Psoas muscle (tissue), 8 donors: ENCODE measurements at regions of chrX and their contacts with region 1.

Region 1: GRCh38 chrX:47523297-47523696 is 37.7 kb upstream of the ARAF start:
- DNase-seq: peak; percentile 85 to 92
- ATAC-seq: peak; percentile 98 to 99 (median 98)
- H3K4me3 ChIP-seq: peak overlapping the region; percentile 61
- H3K27ac ChIP-seq: no peak overlapping the region
- H3K4me1 ChIP-seq: no peaks in the 10 kb centered on the region
- H3K27me3 ChIP-seq: no peaks in the 10 kb centered on the region
- CTCF ChIP-seq: peak; percentile 80

Region 2: GRCh38 chrX:47193475-47194193 is 329.7 kb before region 1 on chrX and contains the start of gene UBA1:
- intact Hi-C with region 1: loop called (anchors 1 to 5 kb)
- DNase-seq: peak; percentile 96 to 98
- ATAC-seq: peak; percentile 88 to 91 (median 90)
- H3K4me3 ChIP-seq: peak within 1 kb of the TSS; percentile 83
- H3K27ac ChIP-seq: peak within 1 kb of the TSS; percentile 97
- H3K4me1 ChIP-seq: peaks cover 43% of the 10 kb centered on the region
- H3K27me3 ChIP-seq: no peaks in the 10 kb centered on the region
- CTCF ChIP-seq: peak; percentile 92
- total RNA-seq, gene UBA1: 145 to 230 (median 187) TPM

Region 3: DNA sequence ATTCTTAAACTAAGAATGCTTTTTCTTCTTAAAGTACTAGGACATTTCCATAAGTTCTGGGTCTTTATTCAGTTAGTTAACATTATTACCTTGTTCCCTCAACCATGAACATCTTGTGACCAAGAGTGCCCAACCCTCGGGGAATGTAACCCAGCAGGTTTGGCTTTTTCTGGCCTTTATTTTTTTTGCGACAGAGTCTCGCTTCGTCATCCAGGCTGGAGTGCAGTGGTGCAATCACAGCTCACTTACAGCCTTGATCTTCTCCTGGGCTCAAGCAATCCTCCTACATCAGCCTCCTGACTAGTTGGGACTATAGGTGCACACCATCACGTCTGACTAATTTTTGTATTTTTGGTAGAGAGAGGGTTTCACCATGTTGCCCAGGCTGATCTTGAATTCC is 225.4 kb before region 1 on chrX:
- intact Hi-C with region 1: no loop called
- DNase-seq: no peak
- ATAC-seq: no peak
- H3K4me3 ChIP-seq: no peak overlapping the region
- H3K27ac ChIP-seq: no peak overlapping the region
- H3K4me1 ChIP-seq: no peaks in the 10 kb centered on the region
- H3K27me3 ChIP-seq: peaks cover 0 to 22% (median 0%) of the 10 kb centered on the region in 3 donors
- CTCF ChIP-seq: no peak

Region 4: DNA sequence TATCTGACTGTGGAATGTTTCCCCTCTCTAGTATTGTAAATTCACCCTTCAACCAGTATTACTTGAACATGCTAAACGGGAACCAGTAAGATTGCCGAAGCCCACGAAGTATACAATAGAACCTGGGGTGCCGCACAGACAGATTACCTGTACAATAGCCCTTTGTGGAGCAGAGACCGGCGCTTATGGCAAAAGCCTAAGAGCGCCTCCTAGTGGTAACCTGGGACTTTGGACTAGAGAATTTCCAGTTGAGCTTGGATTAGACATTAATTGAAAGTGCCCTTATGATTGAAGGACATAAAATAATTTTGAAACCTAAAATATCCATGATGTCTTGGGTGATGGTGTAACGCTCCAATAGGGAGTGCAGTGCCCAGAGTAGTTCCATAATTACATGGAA is 138.8 kb before region 1 on chrX:
- intact Hi-C with region 1: loop called in 1 of 2 experiments (anchors 10 kb)
- DNase-seq: no peak
- ATAC-seq: peak in 3 of 4 donors; percentile 56 to 71 (median 58)
- H3K4me3 ChIP-seq: no peak overlapping the region
- H3K27ac ChIP-seq: no peak overlapping the region
- H3K4me1 ChIP-seq: no peaks in the 10 kb centered on the region
- H3K27me3 ChIP-seq: peaks cover 0 to 9% (median 0%) of the 10 kb centered on the region in 3 donors
- CTCF ChIP-seq: peak; percentile 67

Region 5: DNA sequence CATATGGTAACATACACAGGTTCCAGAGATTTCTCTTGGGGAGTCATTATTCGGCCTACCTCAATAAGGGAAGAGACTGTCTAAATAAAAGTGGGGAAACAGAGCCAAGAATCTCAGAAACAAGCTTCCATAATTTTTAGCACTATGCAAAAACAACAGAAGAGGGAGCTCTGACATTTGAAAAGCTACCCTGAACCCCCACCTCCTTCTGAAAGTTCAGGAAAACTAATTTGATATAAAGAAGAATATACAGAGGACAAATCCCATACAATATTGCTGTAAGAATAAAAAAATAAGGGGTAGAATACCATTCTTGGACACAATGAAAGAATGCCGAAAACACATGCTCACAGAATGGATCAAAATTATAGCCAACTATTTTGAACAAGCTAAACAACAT is 26.0 kb before region 1 on chrX:
- intact Hi-C with region 1: loop called in 1 of 2 experiments (anchors 2 kb)
- DNase-seq: no peak
- ATAC-seq: no peak
- H3K4me3 ChIP-seq: no peak overlapping the region
- H3K27ac ChIP-seq: no peak overlapping the region
- H3K4me1 ChIP-seq: peaks cover 12% of the 10 kb centered on the region
- H3K27me3 ChIP-seq: peaks cover 0 to 12% (median 0%) of the 10 kb centered on the region in 3 donors
- CTCF ChIP-seq: peak; percentile 37